ENCODE measurements at regions of chr3 and their contacts with region 1.

Region 1: GRCh38 chr3:195271116-195271858 is at the start of gene XXYLT1:
- DNase-seq: peak; percentile 86 to 93
- H3K4me3 ChIP-seq: peak within 1 kb of the TSS; percentile 64 to 83
- H3K27ac ChIP-seq: peak within 1 kb of the TSS; percentile 77 to 81
- H3K4me1 ChIP-seq: peaks cover 0 to 25% (median 14%) of the 10 kb centered on the region in 4 donors
- H3K27me3 ChIP-seq: no peaks in the 10 kb centered on the region
- CTCF ChIP-seq: peak; percentile 93

Region 2: DNA sequence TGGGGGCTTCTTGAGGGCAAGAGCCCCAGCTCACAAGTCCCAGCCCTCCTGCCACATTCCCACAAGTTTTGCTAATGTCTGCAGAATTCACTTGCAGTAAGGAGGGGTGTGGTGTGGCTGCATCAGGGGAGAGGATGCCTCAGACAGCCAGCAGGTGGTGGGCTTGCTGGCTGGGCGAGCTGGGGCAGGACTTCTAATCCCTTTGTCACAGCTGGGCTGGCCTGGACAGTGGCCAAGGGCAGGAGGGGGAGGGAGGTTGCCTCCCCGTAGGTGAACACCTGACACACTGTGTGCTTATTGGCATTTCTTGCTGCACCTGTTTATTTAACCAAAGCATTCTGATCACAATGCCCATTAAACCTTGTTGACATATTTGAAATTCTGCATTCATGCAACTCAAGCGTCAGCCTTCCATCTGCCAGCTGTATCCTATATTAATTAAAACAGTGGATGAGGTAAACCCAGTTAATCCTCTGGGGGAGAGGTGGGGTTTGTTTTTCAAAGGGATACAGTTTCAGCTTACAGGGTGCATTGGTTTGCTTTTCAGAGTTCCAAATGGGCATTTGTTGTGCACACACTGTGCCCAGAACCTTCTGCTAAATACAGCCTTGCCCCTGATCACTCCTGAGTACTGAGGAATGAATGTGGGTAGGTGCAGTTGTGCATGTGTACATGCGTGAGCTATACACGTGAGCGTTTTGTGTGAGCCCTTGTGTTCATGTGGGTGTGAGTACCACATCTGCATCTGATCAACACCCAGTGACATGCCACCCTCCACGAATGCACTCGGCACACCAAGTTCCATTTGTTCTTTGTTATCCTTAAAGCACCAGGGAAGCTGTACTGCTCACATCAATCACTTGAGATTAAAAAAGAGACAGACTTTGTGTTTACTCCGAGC is 269.1 kb before region 1 on chr3:
- intact Hi-C with region 1: no loop called
- DNase-seq: peak in 1 of 2 donors; percentile 63
- H3K4me3 ChIP-seq: no peak overlapping the region
- H3K27ac ChIP-seq: no peak overlapping the region
- H3K4me1 ChIP-seq: peaks cover 0 to 10% (median 3%) of the 10 kb centered on the region in 4 donors
- H3K27me3 ChIP-seq: peaks cover 0 to 16% of the 10 kb centered on the region in 2 donors
- CTCF ChIP-seq: no peak

Region 3: GRCh38 chr3:195442573-195443390 is 171.5 kb after region 1 on chr3 and contains the start of gene ACAP2:
- intact Hi-C with region 1: loop called (anchors 2 kb)
- DNase-seq: peak; percentile 99 to 100
- H3K4me3 ChIP-seq: peak within 1 kb of the TSS; percentile 91 to 94
- H3K27ac ChIP-seq: peak within 1 kb of the TSS; percentile 94 to 98
- H3K4me1 ChIP-seq: peaks cover 0 to 26% (median 7%) of the 10 kb centered on the region in 4 donors
- H3K27me3 ChIP-seq: no peaks in the 10 kb centered on the region
- CTCF ChIP-seq: peak in 1 of 2 experiments; percentile 19

Region 4: GRCh38 chr3:195522254-195523023 is 251.2 kb after region 1 on chr3:
- intact Hi-C with region 1: loop called (anchors 2 kb)
- DNase-seq: no peak
- H3K4me3 ChIP-seq: no peak overlapping the region
- H3K27ac ChIP-seq: no peak overlapping the region
- H3K4me1 ChIP-seq: no peaks in the 10 kb centered on the region
- H3K27me3 ChIP-seq: no peaks in the 10 kb centered on the region
- CTCF ChIP-seq: peak; percentile 59 to 79